Activated CD4-positive, alpha-beta memory T cell treated with anti-CD3 and anti-CD28 coated beads for 36 hours (primary cell): ENCODE measurements at regions of chr1 and their contacts with region 1.

Region 1: DNA sequence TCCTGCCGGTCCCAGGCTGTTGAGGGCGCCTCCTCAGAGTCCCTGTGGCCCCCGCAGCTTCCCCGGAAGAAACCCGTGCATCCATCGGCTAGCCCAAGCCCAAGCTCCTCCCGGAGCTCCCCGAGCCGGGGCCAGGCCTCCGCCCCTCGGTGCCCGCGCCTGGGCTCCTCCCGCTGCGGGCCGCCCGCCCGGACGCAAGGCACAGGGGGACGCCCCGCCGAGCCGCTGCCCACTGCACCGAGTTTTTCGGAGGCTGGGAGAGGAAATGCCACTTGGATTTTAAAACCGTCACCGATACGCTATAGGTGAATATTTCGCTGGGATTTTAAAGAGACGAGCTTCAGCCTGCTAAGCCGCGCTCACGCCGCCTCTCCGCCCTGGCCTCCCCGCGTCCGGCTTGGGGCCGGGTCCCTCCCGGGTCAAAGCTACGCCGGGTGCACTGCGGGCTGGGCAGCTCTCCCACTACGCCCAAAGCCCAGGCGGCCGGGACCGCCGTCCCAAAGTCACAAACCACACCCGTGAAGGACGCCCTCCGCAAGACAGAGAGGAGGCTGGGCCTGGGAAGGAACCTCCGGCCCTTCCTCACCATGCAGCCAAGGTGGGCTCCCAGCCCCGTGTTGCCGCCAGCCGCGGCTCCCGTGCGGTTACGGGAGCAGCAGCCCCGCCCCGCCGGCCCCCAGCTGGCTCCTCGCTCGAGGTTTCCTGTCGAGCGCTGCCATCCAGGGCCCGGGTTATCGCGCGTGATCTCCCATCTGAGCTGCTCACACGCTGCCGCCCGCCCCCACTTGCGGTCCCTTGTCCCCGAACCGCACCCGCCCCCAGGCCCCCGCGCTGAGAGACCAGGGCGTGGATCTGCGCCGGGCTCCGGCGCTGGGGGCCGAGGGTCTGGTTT is 63.2 kb downstream of the CD247 start:
- DNase-seq: peak; percentile 88
- H3K4me3 Mint-ChIP-seq: peak overlapping the region; percentile 78
- H3K27ac Mint-ChIP-seq: peak overlapping the region; percentile 84
- H3K4me1 Mint-ChIP-seq: peaks cover 64% of the 10 kb centered on the region
- H3K27me3 Mint-ChIP-seq: no peaks in the 10 kb centered on the region

Region 2: DNA sequence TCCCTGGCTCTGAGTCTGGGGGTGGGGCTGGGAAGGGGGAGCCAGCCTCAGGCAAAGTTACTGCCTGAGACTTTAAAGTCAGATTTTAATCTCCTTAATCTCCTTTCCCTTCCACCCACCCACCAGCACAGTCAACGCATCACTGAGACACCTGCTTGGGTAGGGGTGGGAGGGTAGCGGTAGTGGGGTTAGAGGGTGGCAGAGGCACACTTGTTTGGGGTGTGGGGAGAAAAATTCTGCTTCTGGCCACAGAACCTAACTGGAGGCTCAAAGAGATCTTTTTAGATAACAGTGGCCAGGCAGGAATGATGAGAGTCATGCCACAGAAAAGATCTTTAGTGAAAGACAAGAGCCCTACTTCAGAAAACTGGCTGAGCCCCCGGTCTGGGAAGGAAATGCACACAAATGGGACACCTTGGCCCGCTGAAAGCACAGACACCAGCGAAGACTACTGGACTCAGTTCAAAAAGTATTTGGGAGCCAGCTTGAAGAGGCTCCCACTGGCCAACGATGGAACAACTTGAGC is 19.1 kb after region 1 on chr1:
- CTCF ChIA-PET with region 1: interaction called, 3 read pairs
- POLR2A ChIA-PET with region 1: interaction called, 7 read pairs
- intact Hi-C with region 1: loop called (anchors 2 kb)
- DNase-seq: peak; percentile 69
- H3K4me3 Mint-ChIP-seq: peak overlapping the region; percentile 27
- H3K27ac Mint-ChIP-seq: peak overlapping the region; percentile 64
- H3K4me1 Mint-ChIP-seq: peaks cover 69% of the 10 kb centered on the region
- H3K27me3 Mint-ChIP-seq: no peaks in the 10 kb centered on the region